Posterior cingulate gyrus (tissue), 11 donors: ENCODE measurements at regions of chr6 and their contacts with region 1.

Region 1: DNA sequence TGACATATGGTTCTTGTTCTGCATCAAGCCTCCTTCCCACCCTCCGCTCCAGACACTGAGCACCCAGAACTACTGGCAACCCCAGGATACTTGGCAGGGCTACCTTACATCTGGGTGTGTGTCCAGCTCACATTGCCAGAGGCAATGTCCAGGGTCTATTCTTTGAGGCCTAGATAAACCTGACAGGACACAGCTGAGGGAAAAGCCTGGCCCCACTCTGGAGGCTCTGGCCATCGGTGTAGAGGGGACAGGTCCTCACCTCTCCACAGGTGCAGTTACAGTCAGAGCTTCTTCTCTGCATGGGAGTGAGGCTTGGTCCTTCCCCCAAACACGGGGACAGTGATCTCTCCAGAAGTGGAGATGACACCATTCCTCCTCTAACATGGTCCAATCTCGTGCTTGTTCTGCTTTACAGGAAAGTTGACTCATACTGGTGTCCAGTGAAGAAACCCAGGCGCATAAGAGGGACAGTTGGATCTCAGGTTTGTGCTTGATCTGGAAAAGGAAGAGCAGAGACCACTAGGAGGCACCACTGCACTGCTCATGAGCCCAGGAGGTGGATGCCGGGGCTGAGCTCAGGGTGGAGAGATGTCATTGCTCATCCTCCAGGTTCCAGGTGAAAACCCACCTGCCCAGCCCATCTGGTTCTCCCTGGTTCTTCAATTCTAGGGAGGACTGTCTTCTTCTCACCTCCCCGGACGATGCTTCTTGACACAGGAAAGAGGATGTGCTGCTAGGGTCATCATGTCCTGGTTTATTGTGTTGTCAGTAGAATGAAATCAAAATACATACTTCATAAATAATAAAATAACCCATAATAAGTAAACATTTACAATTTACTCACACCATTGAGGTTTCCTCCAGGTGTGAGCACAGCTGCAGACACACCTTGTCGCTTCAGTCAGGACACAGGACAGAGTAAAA is 14.7 kb downstream of the HLA-F start:
- DNase-seq: peak in 7 of 10 donors; percentile 29 to 89 (median 54)

Region 2: GRCh38 chr6:29632789-29633533 is 105.0 kb before region 1 on chr6 and contains the start of gene GABBR1:
- intact Hi-C with region 1: no loop called
- DNase-seq: peak; percentile 56 to 98 (median 88)

Region 3: DNA sequence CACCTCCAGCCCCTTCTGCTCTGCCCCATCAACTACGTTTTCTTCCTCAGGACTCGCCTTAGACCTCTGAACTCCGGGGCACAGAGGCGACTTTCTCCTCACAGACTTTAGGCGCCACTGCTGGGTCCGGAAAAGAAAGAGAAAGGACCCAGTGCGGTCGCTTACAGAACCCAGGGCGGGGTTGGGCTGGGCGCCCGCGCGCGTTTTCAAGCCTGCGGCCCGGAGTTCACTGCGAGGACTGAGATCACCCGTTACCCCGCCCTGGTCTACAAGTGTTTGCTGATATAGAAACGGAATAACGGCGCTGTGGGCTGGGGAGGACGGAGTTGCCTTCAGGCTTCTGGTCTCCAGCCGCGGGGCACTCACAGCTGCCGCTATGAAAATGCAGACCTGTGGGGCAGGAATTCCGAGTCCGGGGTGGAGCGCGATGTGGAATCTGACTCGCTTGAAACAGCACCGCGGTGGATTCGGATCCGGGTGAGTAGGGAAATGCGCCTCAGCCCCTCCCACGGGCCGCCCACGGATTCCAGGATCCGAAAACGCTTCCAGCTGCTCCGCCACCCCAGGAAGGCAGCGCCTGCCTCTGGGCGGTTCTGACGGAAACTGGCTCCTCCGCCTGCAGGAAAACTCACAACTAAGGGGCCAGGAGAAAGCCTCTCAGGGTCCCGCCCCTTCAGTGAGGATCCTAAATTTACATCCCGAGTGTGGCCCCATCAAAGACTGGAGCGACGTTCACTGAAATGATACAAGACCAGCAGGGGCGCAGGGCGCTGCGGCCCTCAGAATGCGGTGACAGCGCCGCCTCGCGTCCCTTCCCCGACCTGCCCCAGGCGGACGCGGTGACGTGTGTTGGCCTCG is 14.7 kb after region 1 on chr6:
- intact Hi-C with region 1: loop called (anchors 1 kb)
- DNase-seq: peak; percentile 70 to 95 (median 80)

Region 4: DNA sequence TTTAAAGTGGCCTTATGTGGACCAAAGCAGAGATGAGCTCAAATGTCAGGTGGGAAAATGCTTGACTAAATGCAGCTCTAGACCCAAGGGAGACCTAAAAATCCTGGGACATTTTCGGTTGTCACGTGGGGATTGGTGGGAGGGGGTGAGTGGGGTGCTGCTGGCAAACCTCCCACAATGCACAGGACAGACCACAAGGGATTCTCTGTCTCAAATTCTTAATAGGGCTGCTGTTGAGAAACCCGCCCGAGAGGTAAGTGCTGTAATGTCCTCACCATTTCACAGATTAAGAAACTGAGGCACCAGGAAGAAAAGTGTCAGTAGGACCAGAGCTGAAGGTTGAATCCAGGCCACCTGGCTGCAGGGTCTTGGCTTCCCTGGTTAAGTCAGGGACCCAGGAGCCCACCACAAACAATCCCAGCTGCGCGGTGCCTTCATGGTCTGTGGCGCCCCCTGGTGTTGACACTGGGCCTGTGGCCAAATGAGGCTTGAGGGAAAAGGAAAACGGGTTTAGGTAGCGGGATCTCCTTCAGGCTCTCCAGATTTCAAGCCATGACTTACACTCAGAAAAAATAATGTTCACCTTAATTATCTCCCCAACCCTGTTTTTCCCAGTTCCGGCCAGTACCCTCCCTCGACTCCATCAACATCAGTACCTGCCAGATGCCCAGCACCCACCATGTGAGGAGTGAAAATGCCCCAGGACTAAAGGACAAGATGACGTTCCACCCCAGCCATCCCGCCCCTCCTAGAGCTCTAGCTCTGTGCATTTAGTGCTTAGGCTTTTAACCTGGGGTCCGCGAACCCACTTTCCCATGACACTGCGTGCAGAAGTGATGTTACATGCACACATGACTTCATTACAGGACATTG is 96.8 kb after region 1 on chr6:
- intact Hi-C with region 1: loop called (anchors 1 kb)
- DNase-seq: peak in 3 of 10 donors; percentile 44 to 73 (median 51)